ENCODE measurements at regions of chr3 and their contacts with region 1.

Region 1: DNA sequence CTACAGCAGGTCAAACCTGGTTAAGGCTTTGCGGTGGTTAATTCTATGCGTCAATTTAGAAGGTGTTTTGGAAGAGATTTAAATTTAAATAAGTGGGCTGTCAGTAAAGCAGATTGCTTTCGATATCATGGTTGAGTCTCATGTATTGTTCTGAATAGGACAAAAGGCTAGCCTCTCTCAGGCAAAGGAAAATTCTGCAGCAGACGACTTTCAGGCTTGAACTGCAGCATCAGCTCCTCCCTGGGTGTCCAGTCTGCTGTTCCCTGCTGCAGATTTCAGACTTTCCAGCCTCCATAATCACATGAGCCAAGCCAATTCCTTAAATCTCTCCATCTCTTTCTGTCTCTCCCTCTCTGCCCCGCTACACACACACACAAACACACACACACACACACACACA is 143.2 kb downstream of the TUSC7 start:
- DNase-seq: no peak

Region 2: DNA sequence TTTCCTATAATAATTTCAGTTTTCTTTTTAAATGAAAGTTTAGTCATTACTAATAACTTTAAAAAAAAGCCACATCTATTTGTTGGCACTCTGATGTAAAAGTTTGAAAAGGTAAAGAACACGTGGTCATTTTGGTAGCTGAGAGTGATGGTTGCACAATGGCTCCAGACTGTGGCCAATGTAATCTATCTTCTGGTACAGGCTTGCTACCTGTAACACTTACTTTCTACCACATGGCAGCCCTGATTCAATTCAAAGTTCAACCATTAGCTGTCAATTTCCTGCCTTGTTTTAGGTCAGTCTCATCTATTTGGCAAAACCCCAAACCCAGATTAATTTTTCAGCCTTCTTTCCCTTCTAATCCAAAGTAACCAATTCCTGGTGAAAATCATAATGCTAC is 17.1 kb before region 1 on chr3:
- intact Hi-C with region 1: loop called in 1 of 2 experiments (anchors 1 kb)
- DNase-seq: no peak